PC-3 (cell line): ENCODE measurements at regions of chr10 and their contacts with region 1.

Region 1: DNA sequence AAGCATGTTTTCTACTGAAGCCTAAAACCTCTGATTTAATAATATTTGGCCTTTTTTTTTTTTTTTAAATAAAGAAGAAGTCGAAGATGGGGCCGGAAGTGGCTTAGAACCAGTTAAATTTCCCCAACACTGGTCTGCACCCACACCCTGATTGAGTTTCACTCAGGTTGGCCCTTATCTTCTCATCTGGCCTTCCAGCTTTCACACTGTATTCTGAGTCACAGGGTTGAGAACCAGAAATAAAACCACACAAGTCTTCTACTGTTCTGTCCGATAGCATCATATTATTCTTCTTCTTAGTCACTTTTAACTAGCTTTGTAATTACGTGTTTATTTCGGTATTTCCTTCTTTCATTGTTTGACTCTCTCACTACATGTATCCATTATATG is 9.9 kb downstream of the ZNF365 start:
- DNase-seq: peak; percentile 100
- ATAC-seq: peak; percentile 74
- H3K4me3 ChIP-seq: peak overlapping the region; percentile 36
- H3K27ac ChIP-seq: peak overlapping the region; percentile 79
- H3K4me1 ChIP-seq: peaks cover 88% of the 10 kb centered on the region
- H3K27me3 ChIP-seq: no peaks in the 10 kb centered on the region
- CTCF ChIP-seq: no peak

Region 2: DNA sequence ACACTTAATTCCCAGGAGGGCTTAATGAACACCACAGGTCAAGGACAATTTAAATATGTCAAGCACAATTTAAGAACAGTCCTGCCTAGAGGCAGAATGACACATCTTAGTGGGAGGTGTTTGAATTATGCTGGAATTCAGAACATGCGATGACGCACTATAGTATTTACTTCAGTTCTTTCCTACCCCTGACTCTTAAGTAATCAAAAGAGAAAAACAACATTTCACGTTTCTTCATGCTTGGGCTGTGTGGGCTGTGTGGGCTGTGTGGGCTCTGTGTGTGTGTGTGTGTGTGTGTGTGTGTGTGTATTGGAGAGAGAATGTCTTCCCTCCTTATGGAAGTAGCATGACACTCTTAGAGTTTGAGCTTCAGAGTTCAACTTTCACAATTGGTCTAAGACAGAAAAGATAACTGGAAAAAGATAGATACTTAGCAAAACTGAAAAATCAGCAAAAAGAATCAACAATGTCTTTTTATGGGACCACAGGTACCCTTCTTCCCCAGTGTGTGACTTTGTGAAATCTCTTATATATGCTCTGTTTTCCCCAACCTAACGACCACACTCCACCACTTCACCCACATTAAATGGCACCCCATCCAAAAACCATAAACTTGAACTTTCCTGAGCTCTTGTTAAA is 755.1 kb before region 1 on chr10:
- CTCF ChIA-PET with region 1: no interaction called
- POLR2A ChIA-PET with region 1: no interaction called
- intact Hi-C with region 1: loop called (anchors 10 kb)
- DNase-seq: peak; percentile 100
- ATAC-seq: peak; percentile 93
- H3K4me3 ChIP-seq: no peak overlapping the region
- H3K27ac ChIP-seq: peak overlapping the region; percentile 1; the same call in 1 of the 2 replicates
- H3K4me1 ChIP-seq: peaks cover 31% of the 10 kb centered on the region
- H3K27me3 ChIP-seq: no peaks in the 10 kb centered on the region
- CTCF ChIP-seq: no peak

Region 3: GRCh38 chr10:62278441-62278910 is 105.6 kb before region 1 on chr10:
- CTCF ChIA-PET with region 1: no interaction called
- POLR2A ChIA-PET with region 1: no interaction called
- intact Hi-C with region 1: no loop called
- DNase-seq: peak; percentile 28
- ATAC-seq: peak; percentile 15
- H3K4me3 ChIP-seq: no peak overlapping the region
- H3K27ac ChIP-seq: no peak overlapping the region
- H3K4me1 ChIP-seq: no peaks in the 10 kb centered on the region
- H3K27me3 ChIP-seq: no peaks in the 10 kb centered on the region
- CTCF ChIP-seq: no peak

Region 4: DNA sequence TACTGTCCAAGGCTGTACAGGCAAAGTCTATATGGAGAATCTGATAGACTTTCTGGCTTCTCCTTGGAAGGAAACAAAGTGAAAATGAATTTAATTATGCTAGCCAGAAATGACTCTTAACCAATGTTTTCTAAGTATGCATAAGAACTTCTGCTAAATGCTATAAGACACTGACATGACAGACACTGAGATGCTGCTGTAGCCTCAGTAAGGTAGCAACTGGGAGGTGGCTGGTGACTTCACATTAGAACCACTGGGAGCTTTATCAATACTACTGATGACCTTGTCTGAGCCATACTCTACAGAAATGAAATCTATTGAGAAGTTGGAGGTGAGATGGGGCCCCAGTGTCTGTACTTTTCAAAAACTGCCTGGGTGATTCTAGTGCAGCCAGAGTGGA is 178.7 kb after region 1 on chr10:
- CTCF ChIA-PET with region 1: no interaction called
- POLR2A ChIA-PET with region 1: no interaction called
- intact Hi-C with region 1: no loop called
- DNase-seq: no peak
- ATAC-seq: no peak
- H3K4me3 ChIP-seq: no peak overlapping the region
- H3K27ac ChIP-seq: no peak overlapping the region
- H3K4me1 ChIP-seq: peaks cover 10% of the 10 kb centered on the region
- H3K27me3 ChIP-seq: no peaks in the 10 kb centered on the region
- CTCF ChIP-seq: no peak

Region 5: GRCh38 chr10:63133056-63133820 is 749.2 kb after region 1 on chr10 and contains the start of gene NRBF2:
- CTCF ChIA-PET with region 1: no interaction called
- POLR2A ChIA-PET with region 1: no interaction called
- intact Hi-C with region 1: loop called (anchors 5 kb)
- DNase-seq: peak; percentile 100
- ATAC-seq: peak; percentile 95
- H3K4me3 ChIP-seq: peak within 1 kb of the TSS; percentile 75
- H3K27ac ChIP-seq: peak within 1 kb of the TSS; percentile 33
- H3K4me1 ChIP-seq: peaks cover 26% of the 10 kb centered on the region
- H3K27me3 ChIP-seq: no peaks in the 10 kb centered on the region
- CTCF ChIP-seq: peak; percentile 86
- total RNA-seq, gene NRBF2: 43.4 and 44.4 TPM in 2 replicates